Dendritic cell treated with granulocyte-macrophage colony-stimulating factor and Interleukin-4, amounts not matched to agents 40 ng/mL and 50 ng/mL, for 4 days (primary cell): ENCODE measurements at regions of chr1 and their contacts with region 1.

Region 1: DNA sequence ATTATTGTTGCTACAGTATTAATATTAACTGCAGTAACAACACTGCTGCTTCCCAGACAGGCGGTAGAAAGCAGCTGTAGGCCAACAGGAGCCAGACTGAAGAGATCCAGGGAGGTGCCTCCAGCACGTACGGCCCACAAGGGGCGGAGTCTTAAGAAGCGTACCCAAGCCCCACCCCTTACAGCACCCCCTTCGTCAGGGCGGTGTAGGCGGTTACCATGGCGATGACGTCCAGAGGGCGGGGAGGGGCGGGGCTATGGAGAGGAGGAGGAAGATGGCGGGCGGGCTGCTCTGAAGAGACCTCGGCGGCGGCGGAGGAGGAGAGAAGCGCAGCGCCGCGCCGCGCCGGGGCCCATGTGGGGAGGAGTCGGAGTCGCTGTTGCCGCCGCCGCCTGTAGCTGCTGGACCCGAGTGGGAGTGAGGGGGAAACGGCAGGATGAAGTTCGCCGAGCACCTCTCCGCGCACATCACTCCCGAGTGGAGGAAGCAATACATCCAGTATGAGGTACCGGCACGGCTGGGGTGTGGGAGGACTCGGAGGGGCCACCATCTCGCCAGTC is at the start of gene XPR1:
- H3K4me3 Mint-ChIP-seq: no peak within 1 kb of the TSS
- H3K27ac Mint-ChIP-seq: no peak within 1 kb of the TSS
- H3K4me1 Mint-ChIP-seq: peaks cover 5% of the 10 kb centered on the region
- H3K27me3 Mint-ChIP-seq: no peaks in the 10 kb centered on the region

Region 2: DNA sequence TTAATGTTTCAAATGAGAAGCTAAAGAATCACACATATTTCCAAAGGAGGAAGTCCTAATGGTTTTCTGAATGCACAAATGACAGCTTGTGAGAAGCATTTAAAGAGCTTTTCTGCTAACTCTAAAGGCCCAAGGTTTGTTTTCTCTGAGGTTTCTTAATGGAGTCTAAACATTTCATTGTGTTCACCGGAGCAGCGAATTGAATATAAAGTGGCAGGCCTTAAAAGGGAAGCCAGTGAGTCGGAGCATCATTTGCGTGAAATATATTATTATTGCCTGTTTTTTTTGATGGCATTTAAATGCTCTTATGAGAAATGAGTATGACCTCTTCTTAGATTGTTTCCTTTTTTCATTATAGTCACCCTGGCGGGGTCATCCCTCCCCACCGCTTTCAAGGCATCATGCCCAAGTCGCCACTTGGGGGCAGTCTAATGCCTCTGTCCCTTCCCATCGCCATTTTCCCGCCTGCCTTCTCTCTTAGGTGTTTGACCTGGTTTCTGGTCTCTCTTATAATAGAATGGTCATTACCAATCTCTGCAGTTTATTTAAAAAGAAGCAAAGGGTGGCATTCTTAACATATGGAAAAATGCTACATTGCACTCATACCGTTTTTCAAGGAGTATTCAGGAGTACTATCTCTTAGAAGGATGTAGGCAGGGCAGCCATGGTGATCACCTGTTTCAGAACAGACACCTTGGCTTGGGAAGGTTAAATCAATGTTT is 98.4 kb before region 1 on chr1:
- intact Hi-C with region 1: loop called (anchors 2 kb)
- H3K4me3 Mint-ChIP-seq: no peak overlapping the region
- H3K27ac Mint-ChIP-seq: no peak overlapping the region
- H3K4me1 Mint-ChIP-seq: no peaks in the 10 kb centered on the region
- H3K27me3 Mint-ChIP-seq: peaks cover 4% of the 10 kb centered on the region

Region 3: GRCh38 chr1:181105134-181106021 is 473.5 kb after region 1 on chr1:
- intact Hi-C with region 1: no loop called
- H3K4me3 Mint-ChIP-seq: peak overlapping the region; percentile 78
- H3K27ac Mint-ChIP-seq: peak overlapping the region; percentile 83
- H3K4me1 Mint-ChIP-seq: peaks cover 72% of the 10 kb centered on the region
- H3K27me3 Mint-ChIP-seq: peaks cover 32% of the 10 kb centered on the region